Heart right ventricle (tissue), 16 donors: ENCODE measurements at regions of chr14 and their contacts with region 1.

Region 1: DNA sequence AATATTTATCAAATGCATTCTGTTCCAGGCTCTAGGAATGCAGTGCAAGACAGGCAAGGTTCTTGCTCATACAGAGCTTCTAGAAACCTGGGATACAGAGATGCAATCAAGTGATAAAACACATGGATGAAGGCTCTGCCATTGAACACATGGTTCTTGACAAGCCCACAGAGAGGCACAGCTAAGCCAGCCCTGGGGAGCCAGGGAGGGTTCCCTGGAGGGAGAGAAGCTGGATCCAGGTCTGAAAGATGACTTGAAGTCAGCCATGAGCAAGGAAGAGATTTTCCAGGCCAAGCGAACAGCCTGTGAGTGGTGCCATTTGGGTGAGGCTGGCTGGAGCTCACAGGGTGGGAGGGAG is 66.2 kb downstream of the IRF2BPL start:
- DNase-seq: no peak
- ATAC-seq: peak in 1 of 8 donors; percentile 4
- H3K4me3 ChIP-seq: peak overlapping the region in 9 of 10 donors; percentile 30 to 60 (median 50)
- H3K27ac ChIP-seq: peak overlapping the region in 9 of 10 donors; percentile 73 to 99 (median 92)
- H3K4me1 ChIP-seq: peaks cover 1 to 50% (median 24%) of the 10 kb centered on the region in 9 donors
- H3K27me3 ChIP-seq: no peaks in the 10 kb centered on the region
- CTCF ChIP-seq: no peak

Region 2: GRCh38 chr14:77000340-77001270 is 38.3 kb after region 1 on chr14:
- intact Hi-C with region 1: loop called in 1 of 10 experiments (anchors 5 kb)
- DNase-seq: peak in 1 of 2 donors; percentile 37
- ATAC-seq: peak; percentile 55 to 80 (median 73)
- H3K4me3 ChIP-seq: peak overlapping the region in 8 of 10 donors; percentile 8 to 39 (median 22)
- H3K27ac ChIP-seq: peak overlapping the region in 5 of 10 donors; percentile 12 to 40 (median 27)
- H3K4me1 ChIP-seq: peaks cover 0 to 15% (median 11%) of the 10 kb centered on the region in 9 donors
- H3K27me3 ChIP-seq: no peaks in the 10 kb centered on the region
- CTCF ChIP-seq: peak in 1 of 9 donors; percentile 9

Region 3: GRCh38 chr14:77014004-77014604 is 51.8 kb after region 1 on chr14:
- intact Hi-C with region 1: loop called in 1 of 10 experiments (anchors 5 kb)
- DNase-seq: peak; percentile 55 to 80
- ATAC-seq: peak; percentile 88 to 97 (median 94)
- H3K4me3 ChIP-seq: no peak overlapping the region
- H3K27ac ChIP-seq: peak overlapping the region in 8 of 10 donors; percentile 63 to 82 (median 76)
- H3K4me1 ChIP-seq: peaks cover 0 to 22% (median 12%) of the 10 kb centered on the region in 9 donors
- H3K27me3 ChIP-seq: no peaks in the 10 kb centered on the region
- CTCF ChIP-seq: no peak

Region 4: DNA sequence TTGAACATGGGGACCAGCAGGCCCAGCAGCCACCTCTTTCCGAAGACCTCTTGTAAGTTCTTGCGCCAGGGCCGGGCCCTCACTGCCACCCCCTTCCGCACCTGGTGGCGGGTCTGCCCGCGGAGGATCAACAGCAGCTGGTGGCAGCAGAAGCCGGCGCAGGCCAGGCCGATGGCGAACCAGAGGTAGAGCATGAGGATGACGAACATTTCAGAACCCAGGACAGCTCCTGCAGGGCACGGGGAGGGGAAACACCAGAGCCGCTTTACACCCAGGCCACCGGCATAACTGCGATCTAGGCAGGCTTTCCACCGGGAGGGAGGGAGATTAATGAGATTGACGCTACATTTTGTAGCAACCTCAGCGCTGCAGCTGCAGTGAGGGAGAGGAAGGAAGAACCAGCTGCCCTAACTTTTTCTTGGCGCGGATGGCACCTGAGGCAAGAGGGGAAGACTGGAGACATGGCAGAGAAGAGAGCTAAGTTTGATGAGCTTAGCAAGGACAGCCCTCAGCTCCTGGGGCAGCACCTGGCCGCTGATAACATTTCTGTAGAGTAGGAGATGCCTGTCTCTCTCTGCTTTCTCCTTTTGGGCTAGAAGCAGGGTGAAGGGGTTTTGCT is 171.5 kb after region 1 on chr14:
- intact Hi-C with region 1: no loop called
- DNase-seq: peak; percentile 34 to 65
- ATAC-seq: peak; percentile 63 to 86 (median 82)
- H3K4me3 ChIP-seq: no peak overlapping the region
- H3K27ac ChIP-seq: no peak overlapping the region
- H3K4me1 ChIP-seq: peaks cover 0 to 5% (median 0%) of the 10 kb centered on the region in 9 donors
- H3K27me3 ChIP-seq: peaks cover 6 to 82% (median 60%) of the 10 kb centered on the region in 7 donors
- CTCF ChIP-seq: no peak